K562 (cell line): ENCODE measurements at regions of chr3 and their contacts with region 1.

Region 1: DNA sequence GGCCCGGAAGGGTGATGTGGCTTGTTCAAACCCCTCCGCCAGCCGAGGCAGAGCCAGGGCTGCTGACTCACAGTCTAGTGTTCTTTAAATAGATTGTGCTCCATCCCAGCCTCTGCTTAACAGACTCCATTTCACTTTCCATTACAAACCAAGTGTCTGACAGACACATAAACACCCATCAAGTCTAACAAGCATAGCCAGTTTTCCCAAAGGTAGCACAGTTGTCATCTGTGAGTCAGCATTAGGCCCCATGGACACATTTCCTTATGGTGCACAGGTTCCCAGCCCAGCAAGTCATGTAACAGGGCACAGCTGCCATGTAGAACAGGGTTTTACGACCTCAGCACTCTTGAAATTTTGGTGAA is 109.9 kb upstream of the RAP2B start:
- DNase-seq: peak; percentile 52 to 91 (median 68)
- ATAC-seq: peak; percentile 92
- H3K4me3 ChIP-seq: no peak overlapping the region
- H3K27ac ChIP-seq: peak overlapping the region; percentile 93
- H3K4me1 ChIP-seq: peaks cover 10 to 26% of the 10 kb centered on the region in 2 experiments; a peak in 4 of 5 replicates
- H3K27me3 ChIP-seq: no peaks in the 10 kb centered on the region
- CTCF ChIP-seq: no peak
- EP300 ChIP-seq: peak; percentile 51; the same call in 1 of the 2 replicates
- POLR2A ChIP-seq: 0 out of 2 replicates have a peak, but pooled peaks have one; percentile 40
- RAD21 ChIP-seq: 0 out of 4 replicates have a peak, but pooled peaks of 1 of the 2 experiments have one; percentile 0

Region 2: DNA sequence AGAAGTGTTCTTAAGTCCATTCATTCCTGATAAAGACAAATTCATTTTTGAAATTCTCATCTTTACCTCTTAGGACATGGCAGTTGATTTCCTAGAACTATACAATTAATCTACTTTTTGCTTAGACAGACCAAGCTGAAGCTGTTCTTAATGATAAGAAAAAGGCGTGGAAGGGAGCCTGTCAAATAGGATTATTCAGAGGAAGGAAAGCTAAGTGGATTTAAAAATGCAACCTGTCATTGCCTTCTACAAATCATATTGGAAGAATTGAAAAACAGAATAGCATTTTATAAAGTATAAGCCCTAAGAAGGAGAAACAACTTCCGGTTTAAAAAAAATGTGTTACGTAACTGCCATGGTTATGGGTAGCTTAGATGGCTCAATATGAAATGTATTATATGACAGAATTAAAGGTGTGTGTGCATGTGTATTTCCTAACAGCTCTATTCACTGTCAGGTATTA is 28.7 kb after region 1 on chr3:
- CTCF ChIA-PET with region 1: no interaction called
- POLR2A ChIA-PET with region 1: no interaction called
- in situ Hi-C with region 1: no loop called
- intact Hi-C with region 1: loop called (anchors 2 kb)
- DNase-seq: peak; percentile 64 to 84 (median 70)
- ATAC-seq: peak; percentile 87
- H3K4me3 ChIP-seq: no peak overlapping the region
- H3K27ac ChIP-seq: peak overlapping the region; percentile 52
- H3K4me1 ChIP-seq: peaks cover 12 to 19% of the 10 kb centered on the region in 2 experiments; a peak in 4 of 5 replicates
- H3K27me3 ChIP-seq: no peaks in the 10 kb centered on the region
- CTCF ChIP-seq: no peak
- EP300 ChIP-seq: peak; percentile 96
- POLR2A ChIP-seq: no peak
- RAD21 ChIP-seq: no peak

Region 3: GRCh38 chr3:153257673-153258351 is 205.7 kb after region 1 on chr3:
- CTCF ChIA-PET with region 1: no interaction called
- POLR2A ChIA-PET with region 1: no interaction called
- in situ Hi-C with region 1: no loop called
- intact Hi-C with region 1: no loop called
- DNase-seq: no peak
- ATAC-seq: no peak; the same call in 2 of the 3 replicates
- H3K4me3 ChIP-seq: no peak overlapping the region
- H3K27ac ChIP-seq: no peak overlapping the region
- H3K4me1 ChIP-seq: no peaks in the 10 kb centered on the region
- H3K27me3 ChIP-seq: no peaks in the 10 kb centered on the region
- CTCF ChIP-seq: no peak
- EP300 ChIP-seq: no peak
- POLR2A ChIP-seq: no peak
- RAD21 ChIP-seq: no peak